Psoas muscle (tissue), 8 donors: ENCODE measurements at regions of chr9 and their contacts with region 1.

Region 1: GRCh38 chr9:30591461-30591860 is 1793.0 kb upstream of the ACO1 start:
- DNase-seq: no peak
- ATAC-seq: no peak
- H3K4me3 ChIP-seq: no peak overlapping the region
- H3K27ac ChIP-seq: no peak overlapping the region
- H3K4me1 ChIP-seq: no peaks in the 10 kb centered on the region
- H3K27me3 ChIP-seq: no peaks in the 10 kb centered on the region
- CTCF ChIP-seq: no peak

Region 2: DNA sequence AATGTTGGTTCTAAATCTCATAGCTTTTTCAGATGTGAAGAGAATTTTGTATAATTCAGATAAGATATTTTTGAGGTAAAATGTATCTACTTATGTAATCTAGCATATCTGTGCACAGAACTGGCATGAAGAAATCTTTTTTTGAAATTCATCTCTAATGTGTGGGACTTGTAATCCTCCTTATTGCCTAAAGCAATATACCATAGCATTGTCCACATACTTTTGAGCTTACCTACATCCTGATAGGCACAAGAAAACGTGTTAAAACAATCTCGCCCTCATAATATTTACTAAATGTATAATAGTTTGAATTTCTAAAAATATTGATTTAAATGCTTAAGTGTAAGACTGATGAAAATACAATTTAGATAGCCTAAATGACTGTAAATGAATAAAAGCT is 106.5 kb after region 1 on chr9:
- intact Hi-C with region 1: loop called in 1 of 2 experiments (anchors 5 kb)
- DNase-seq: no peak
- ATAC-seq: no peak
- H3K4me3 ChIP-seq: no peak overlapping the region
- H3K27ac ChIP-seq: no peak overlapping the region
- H3K4me1 ChIP-seq: no peaks in the 10 kb centered on the region
- H3K27me3 ChIP-seq: no peaks in the 10 kb centered on the region
- CTCF ChIP-seq: no peak